H1 (cell line): ENCODE measurements at regions of chr20 and their contacts with region 1.

Region 1: DNA sequence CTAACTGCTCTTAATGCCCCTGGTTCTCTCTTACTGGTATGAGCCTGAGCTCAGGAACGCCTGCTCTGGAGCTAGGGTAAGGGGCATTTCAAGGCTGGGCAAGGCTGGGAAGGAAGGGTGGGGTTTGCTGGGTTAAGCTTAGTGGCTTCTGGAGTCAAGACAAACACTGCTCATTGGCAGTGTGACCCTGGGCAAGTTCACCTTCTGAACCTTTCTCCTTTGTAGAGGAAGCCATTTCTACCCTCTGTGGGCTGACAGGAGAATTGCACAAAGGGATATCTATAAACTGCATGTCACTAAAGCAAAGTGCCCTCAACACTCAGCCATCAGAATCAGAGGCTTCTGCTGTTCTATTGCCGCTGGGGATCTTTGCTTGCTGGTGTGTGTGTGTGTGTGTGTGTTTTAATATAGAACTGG is 20.3 kb upstream of the LRRN4 start:
- DNase-seq: no peak
- H3K4me3 ChIP-seq: no peak overlapping the region
- H3K27ac ChIP-seq: no peak overlapping the region
- H3K4me1 ChIP-seq: no peaks in the 10 kb centered on the region
- H3K27me3 ChIP-seq: no peaks in the 10 kb centered on the region
- CTCF ChIP-seq: peak in 2 of 3 experiments; percentile 25 to 54; a peak in 2 of 4 replicates
- EP300 ChIP-seq: no peak
- POLR2A ChIP-seq: no peak
- RAD21 ChIP-seq: peak; percentile 45 to 48

Region 2: GRCh38 chr20:6044115-6044514 is 30.0 kb before region 1 on chr20:
- CTCF ChIA-PET with region 1: interaction called, 10 read pairs
- POLR2A ChIA-PET with region 1: no interaction called
- DNase-seq: no peak
- H3K4me3 ChIP-seq: no peak overlapping the region
- H3K27ac ChIP-seq: no peak overlapping the region
- H3K4me1 ChIP-seq: no peaks in the 10 kb centered on the region
- H3K27me3 ChIP-seq: peaks cover 0 to 2% (median under 1%) of the 10 kb centered on the region in 4 experiments; a peak in 2 of 7 replicates
- CTCF ChIP-seq: no peak
- EP300 ChIP-seq: no peak
- POLR2A ChIP-seq: no peak
- RAD21 ChIP-seq: no peak

Region 3: GRCh38 chr20:6058684-6059295 is 15.4 kb before region 1 on chr20:
- CTCF ChIA-PET with region 1: interaction called, 22 read pairs
- POLR2A ChIA-PET with region 1: interaction called, 6 read pairs
- DNase-seq: no peak
- H3K4me3 ChIP-seq: no peak overlapping the region
- H3K27ac ChIP-seq: no peak overlapping the region
- H3K4me1 ChIP-seq: peaks cover 0 to 1% (median 0%) of the 10 kb centered on the region in 4 experiments; a peak in 2 of 7 replicates
- H3K27me3 ChIP-seq: peaks cover 0 to 9% (median 4%) of the 10 kb centered on the region in 4 experiments; a peak in 5 of 7 replicates
- CTCF ChIP-seq: no peak
- EP300 ChIP-seq: no peak
- POLR2A ChIP-seq: no peak
- RAD21 ChIP-seq: no peak

Region 4: GRCh38 chr20:6115221-6115895 is 41.2 kb after region 1 on chr20:
- CTCF ChIA-PET with region 1: no interaction called
- POLR2A ChIA-PET with region 1: no interaction called
- DNase-seq: no peak
- H3K4me3 ChIP-seq: no peak overlapping the region
- H3K27ac ChIP-seq: no peak overlapping the region
- H3K4me1 ChIP-seq: peaks cover 0 to 2% (median 0%) of the 10 kb centered on the region in 4 experiments; a peak in 2 of 7 replicates
- H3K27me3 ChIP-seq: no peaks in the 10 kb centered on the region
- CTCF ChIP-seq: no peak
- EP300 ChIP-seq: no peak
- POLR2A ChIP-seq: no peak
- RAD21 ChIP-seq: no peak

Region 5: GRCh38 chr20:6169251-6169650 is 95.1 kb after region 1 on chr20:
- CTCF ChIA-PET with region 1: no interaction called
- POLR2A ChIA-PET with region 1: no interaction called
- DNase-seq: no peak
- H3K4me3 ChIP-seq: no peak overlapping the region
- H3K27ac ChIP-seq: no peak overlapping the region
- H3K4me1 ChIP-seq: no peaks in the 10 kb centered on the region
- H3K27me3 ChIP-seq: no peaks in the 10 kb centered on the region
- CTCF ChIP-seq: peak in 2 of 3 experiments; percentile 5 to 20; a peak in 2 of 4 replicates
- EP300 ChIP-seq: no peak
- POLR2A ChIP-seq: no peak
- RAD21 ChIP-seq: peak; percentile 45 to 58